Psoas muscle (tissue), 8 donors: ENCODE measurements at regions of chr10 and their contacts with region 1.

Region 1: DNA sequence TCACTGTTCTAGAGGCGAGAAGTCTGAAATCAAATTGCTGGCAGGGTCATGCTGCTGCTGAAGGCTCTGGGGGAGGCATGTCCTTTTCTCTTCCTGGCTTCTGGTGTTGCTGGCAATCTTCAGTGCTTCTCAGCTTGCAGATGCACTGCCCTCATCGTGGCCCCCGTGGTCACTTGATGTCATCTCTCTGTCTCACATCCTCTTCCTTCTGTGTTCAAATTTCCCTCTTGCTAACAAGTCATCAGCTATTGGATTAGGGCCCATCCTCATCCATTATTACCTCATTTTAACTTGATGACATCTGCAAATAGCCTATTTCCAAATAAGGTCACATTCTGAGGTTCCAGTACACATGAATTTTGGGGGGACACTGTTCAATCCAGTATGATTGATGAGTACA is 36.6 kb upstream of the SRGN start:
- DNase-seq: peak in 1 of 2 donors; percentile 33
- ATAC-seq: peak in 2 of 4 donors; percentile 16 to 35
- H3K4me3 ChIP-seq: no peak overlapping the region
- H3K27ac ChIP-seq: no peak overlapping the region
- H3K4me1 ChIP-seq: no peaks in the 10 kb centered on the region
- H3K27me3 ChIP-seq: no peaks in the 10 kb centered on the region
- CTCF ChIP-seq: no peak

Region 2: GRCh38 chr10:69087590-69088470 is 36.5 kb after region 1 on chr10 and contains the start of gene SRGN:
- intact Hi-C with region 1: loop called in 1 of 2 experiments (anchors 5 kb)
- DNase-seq: peak; percentile 31 to 58
- ATAC-seq: peak; percentile 34 to 81 (median 64)
- H3K4me3 ChIP-seq: peak within 1 kb of the TSS; percentile 64
- H3K27ac ChIP-seq: peak within 1 kb of the TSS; percentile 83
- H3K4me1 ChIP-seq: peaks cover 2% of the 10 kb centered on the region
- H3K27me3 ChIP-seq: no peaks in the 10 kb centered on the region
- CTCF ChIP-seq: no peak
- total RNA-seq, gene SRGN: 27.8 to 43.4 (median 30.5) TPM